ENCODE measurements at regions of chr12 and their contacts with region 1.

Region 1: GRCh38 chr12:30939234-30939633 is 12.7 kb downstream of the TSPAN11 start:
- DNase-seq: no peak
- ATAC-seq: no peak
- H3K4me3 ChIP-seq: no peak overlapping the region
- H3K27ac ChIP-seq: no peak overlapping the region
- H3K4me1 ChIP-seq: no peaks in the 10 kb centered on the region
- H3K27me3 ChIP-seq: no peaks in the 10 kb centered on the region

Region 2: GRCh38 chr12:30985814-30986452 is 46.7 kb after region 1 on chr12:
- intact Hi-C with region 1: loop called in 1 of 2 experiments (anchors 1 kb)
- DNase-seq: no peak
- ATAC-seq: no peak
- H3K4me3 ChIP-seq: no peak overlapping the region
- H3K27ac ChIP-seq: no peak overlapping the region
- H3K4me1 ChIP-seq: no peaks in the 10 kb centered on the region
- H3K27me3 ChIP-seq: no peaks in the 10 kb centered on the region

Measured in aorta (tissue), 5 donors.